HepG2 (cell line): ENCODE measurements at regions of chr7 and their contacts with region 1.

Region 1: DNA sequence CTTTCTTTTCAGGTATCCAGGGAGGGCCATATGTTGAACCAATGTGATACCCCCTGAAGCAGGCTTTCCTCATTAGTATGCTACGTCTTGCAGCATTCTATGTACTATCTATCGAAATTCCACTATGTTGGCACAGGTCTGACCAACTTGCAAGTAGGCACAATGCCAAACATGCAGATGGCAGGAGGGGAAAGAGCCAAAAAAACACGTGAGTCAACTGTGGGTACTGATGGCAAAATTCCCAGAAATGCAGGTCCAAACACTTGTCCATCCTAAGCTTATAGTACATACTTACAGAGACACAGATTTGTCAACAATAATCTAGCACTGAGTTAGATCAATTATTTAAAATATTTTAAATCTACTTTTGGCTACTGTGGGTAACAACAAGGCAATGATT is 394.9 kb downstream of the DGKB start:
- DNase-seq: no peak
- ATAC-seq: no peak
- H3K4me3 ChIP-seq: no peak overlapping the region
- H3K27ac ChIP-seq: no peak overlapping the region
- H3K4me1 ChIP-seq: no peaks in the 10 kb centered on the region
- H3K27me3 ChIP-seq: no peaks in the 10 kb centered on the region
- CTCF ChIP-seq: no peak
- EP300 ChIP-seq: no peak
- POLR2A ChIP-seq: no peak
- RAD21 ChIP-seq: no peak

Region 2: DNA sequence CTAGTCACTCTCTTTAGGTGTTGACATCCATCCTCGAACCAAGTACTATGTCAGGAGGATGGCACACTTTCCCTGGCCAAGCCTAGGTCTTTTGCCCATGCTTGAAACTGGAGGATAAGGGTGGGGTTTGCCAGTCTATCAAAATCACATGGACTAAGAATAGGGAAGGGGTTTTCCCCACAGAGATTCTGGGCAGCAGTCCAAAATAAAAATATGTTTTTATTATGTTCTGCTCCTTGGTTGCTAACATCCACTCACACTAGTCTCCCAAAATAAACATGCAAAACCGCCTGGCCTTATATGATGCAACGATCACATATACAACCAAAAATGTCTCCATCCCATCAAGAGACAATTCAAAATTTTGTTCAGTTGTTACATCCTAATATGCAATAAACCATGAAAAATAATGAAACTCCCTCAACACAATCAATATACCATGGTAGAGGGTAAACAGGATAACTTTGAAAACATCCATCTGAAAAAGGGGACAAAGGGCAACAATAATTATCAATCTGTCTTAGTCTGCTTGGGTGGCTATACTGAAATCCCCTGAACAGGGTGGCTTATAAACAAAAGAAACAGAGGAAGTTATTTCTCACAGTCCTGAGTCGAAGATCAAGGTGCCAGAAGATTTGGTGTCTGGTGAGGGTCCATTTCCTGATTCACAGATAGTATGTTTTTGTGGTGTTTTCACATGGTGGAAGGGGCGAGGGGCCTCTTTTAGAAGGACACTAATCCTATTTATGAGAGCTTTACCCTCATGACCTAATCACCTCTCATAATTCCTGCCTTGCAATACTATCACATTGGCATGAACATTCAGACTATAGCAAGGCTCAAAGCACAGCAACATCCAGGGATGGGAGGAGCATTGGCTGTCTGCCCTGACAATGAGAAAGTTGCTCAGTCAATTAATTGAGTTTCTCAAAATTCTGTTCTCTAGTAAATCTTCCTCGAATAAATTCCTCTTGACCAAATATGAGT is 677.4 kb before region 1 on chr7:
- CTCF ChIA-PET with region 1: no interaction called
- POLR2A ChIA-PET with region 1: no interaction called
- in situ Hi-C with region 1: no loop called
- intact Hi-C with region 1: loop called (anchors 10 kb)
- DNase-seq: no peak
- ATAC-seq: no peak
- H3K4me3 ChIP-seq: no peak overlapping the region
- H3K27ac ChIP-seq: no peak overlapping the region
- H3K4me1 ChIP-seq: no peaks in the 10 kb centered on the region
- H3K27me3 ChIP-seq: no peaks in the 10 kb centered on the region
- CTCF ChIP-seq: no peak
- EP300 ChIP-seq: no peak
- POLR2A ChIP-seq: no peak
- RAD21 ChIP-seq: no peak